BJ (cell line): ENCODE measurements at regions of chr16 and their contacts with region 1.

Region 1: DNA sequence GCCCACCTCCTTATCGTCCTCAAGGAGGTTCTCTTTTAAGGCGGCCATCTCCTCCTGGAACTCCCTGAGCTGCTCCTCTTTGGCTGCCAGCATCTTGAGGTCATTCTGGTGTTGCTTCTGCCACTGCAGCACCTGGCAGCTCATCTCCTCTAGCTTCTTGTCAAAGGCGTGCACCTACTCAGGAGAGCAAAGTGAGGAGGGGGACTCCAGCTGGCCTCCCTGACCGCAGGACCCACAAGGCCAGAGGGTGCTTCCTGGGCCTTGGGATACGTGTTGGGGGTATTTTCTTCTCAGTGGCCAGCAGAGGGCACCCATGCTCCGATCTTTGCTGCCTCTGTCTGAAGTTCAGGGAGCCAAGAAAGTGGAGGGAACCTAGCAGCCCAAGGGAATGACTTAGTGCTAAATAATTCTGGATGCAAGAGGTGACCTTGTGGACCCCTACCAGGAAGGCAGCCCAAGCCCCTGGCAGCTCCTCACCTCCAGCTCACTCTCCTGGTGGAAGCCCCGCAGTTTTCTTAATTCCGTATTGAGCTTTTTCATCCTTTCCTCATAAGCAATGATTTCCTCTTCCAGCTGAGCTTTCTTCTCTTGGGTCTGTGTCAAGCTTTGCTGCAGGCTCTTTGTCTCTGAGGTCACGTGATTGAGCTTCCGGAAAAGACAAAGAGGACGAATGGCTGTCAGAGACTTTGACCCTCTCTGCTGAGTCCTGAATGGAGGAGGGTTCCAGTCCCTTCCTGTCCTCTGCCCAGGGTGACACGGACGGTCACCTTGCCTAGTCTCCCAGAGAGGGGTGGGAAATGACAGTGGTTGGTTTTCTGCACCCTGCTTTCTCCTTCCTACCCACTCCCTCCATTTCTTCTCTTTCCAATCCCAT is 31.4 kb downstream of the DHX38 start:
- DNase-seq: peak; percentile 5
- H3K4me3 ChIP-seq: no peak overlapping the region
- H3K27me3 ChIP-seq: no peaks in the 10 kb centered on the region
- CTCF ChIP-seq: peak; percentile 85

Region 2: GRCh38 chr16:71979617-71980016 is 145.4 kb before region 1 on chr16:
- CTCF ChIA-PET with region 1: no interaction called
- POLR2A ChIA-PET with region 1: no interaction called
- DNase-seq: no peak
- H3K4me3 ChIP-seq: no peak overlapping the region
- H3K27me3 ChIP-seq: no peaks in the 10 kb centered on the region
- CTCF ChIP-seq: no peak

Region 3: GRCh38 chr16:72111657-72112451 is 13.1 kb before region 1 on chr16:
- CTCF ChIA-PET with region 1: interaction called, 10 read pairs
- POLR2A ChIA-PET with region 1: no interaction called
- DNase-seq: no peak
- H3K4me3 ChIP-seq: no peak overlapping the region
- H3K27me3 ChIP-seq: no peaks in the 10 kb centered on the region
- CTCF ChIP-seq: no peak

Region 4: DNA sequence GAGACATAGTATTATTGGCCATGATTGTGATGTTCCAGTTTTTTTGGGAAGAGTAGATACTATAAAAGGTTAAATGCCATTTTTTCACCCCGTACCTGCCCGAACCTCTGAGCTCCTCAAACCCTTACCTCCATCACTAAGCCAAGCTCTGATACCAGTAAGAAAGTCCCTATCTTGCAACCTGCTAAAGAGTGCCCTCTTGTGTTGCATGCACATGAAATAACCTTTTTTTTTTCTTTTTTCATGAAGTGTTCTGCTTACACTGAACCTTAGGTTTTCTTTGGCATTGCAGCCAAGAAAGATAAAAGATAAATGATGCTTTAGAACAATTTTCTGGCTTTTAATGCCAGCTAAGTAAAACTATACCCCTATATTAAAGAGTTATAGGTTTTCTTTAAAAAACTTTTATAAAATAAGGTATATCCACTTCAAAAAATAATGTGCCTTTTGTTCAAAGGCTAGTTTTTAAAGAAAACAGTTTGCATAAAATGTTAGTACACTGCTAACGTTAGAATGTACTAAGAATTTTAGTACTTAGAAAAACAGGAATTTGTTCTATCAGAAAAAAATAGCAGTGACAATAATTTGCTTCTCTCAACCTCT is 342.3 kb after region 1 on chr16:
- CTCF ChIA-PET with region 1: interaction called, 27 read pairs
- POLR2A ChIA-PET with region 1: no interaction called
- DNase-seq: no peak
- H3K4me3 ChIP-seq: no peak overlapping the region
- H3K27me3 ChIP-seq: no peaks in the 10 kb centered on the region
- CTCF ChIP-seq: peak; percentile 77

Region 5: GRCh38 chr16:73878611-73879010 is 1753.6 kb after region 1 on chr16:
- CTCF ChIA-PET with region 1: interaction called, 12 read pairs
- POLR2A ChIA-PET with region 1: no interaction called
- DNase-seq: peak; percentile 32
- H3K4me3 ChIP-seq: no peak overlapping the region
- H3K27me3 ChIP-seq: no peaks in the 10 kb centered on the region
- CTCF ChIP-seq: peak; percentile 62

Region 6: DNA sequence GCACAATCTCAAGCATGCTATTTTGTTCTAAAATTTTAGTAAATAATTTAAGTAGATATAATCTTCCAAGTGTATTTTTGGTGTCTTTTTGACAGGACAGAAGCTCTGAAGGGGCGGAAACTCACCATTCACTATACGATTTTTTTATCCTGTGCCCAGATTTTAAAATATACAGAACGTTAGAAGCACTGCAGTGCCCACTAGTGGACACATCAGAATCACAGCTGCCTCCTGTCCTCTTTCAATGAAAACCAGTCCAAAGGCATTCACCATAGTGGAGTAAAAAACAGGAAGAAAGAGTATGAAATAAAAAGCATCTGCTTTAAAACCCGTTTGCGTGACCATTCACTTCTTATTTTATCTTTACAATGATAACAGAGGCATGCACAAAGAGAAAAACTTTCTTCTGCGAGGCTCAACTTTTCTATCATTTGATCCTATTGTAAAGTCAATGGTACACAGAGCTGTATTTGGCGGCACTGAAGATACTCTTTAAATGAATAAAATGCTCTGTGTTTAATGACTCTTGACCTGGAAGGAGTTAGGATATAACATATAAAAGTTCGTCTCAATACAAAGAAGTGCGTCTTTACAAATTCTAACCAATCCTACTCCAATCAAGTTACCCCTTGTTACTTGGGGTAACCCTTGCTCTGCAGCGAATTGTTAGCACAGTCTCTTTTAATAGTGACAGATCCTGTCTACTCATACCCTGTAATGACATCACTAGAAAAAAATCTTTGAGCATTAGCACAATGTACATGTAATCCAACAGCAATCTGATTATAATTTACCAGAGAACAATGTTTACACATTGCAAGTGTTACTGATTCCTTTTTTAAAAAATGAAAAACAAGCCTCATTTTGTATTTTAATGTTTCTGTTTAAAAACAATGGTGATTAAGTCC is 1831.8 kb after region 1 on chr16:
- CTCF ChIA-PET with region 1: interaction called, 11 read pairs
- POLR2A ChIA-PET with region 1: no interaction called
- DNase-seq: peak; percentile 9
- H3K4me3 ChIP-seq: no peak overlapping the region
- H3K27me3 ChIP-seq: no peaks in the 10 kb centered on the region
- CTCF ChIP-seq: peak; percentile 88

Region 7: DNA sequence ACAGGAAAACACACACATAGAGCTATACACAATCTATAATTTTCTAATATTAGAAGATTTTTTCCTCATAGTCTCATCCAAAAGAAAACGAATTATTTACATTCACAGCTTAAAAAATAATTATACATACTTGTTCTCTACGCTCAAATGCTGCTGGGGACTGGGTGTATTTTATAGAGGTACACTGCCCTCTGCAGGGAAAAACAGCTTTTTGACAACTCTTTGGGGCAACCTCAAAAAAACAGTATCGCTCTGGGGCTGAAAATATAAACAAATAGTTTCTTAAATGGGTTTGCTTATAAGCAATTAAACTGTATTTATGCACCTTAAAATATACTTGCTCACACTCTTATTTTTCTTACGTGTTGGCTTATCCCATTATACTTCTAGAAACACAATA is 1909.9 kb after region 1 on chr16:
- CTCF ChIA-PET with region 1: interaction called, 11 read pairs
- POLR2A ChIA-PET with region 1: no interaction called
- DNase-seq: no peak
- H3K4me3 ChIP-seq: no peak overlapping the region
- H3K27me3 ChIP-seq: no peaks in the 10 kb centered on the region
- CTCF ChIP-seq: peak; percentile 40; the same call in 1 of the 2 replicates